Activated B cell treated with CpG ODN at 0.5 μM for 24 hours (primary cell): ENCODE measurements at regions of chr4 and their contacts with region 1.

Region 1: DNA sequence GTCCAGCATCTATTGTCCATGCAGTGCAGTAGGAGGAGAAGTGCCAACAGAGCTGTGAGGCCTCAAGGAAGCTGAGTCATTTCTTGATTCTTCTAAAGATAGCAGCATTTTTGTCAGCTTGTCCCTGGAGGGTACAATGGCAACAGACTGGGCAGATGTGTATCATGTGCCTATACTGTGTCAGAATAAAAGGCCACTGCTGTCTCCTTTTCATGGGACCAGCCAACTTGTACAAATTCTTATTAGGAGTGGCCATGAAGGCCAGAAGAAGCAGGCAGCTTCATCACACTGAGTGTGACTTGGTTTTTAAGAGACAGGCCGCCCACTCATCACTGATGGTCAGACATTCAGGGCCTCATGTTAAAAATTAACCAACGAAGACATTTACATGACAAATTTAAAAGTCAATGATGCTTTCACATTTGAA is 185.0 kb upstream of the FAM241A start:
- DNase-seq: no peak
- ATAC-seq: peak; percentile 84
- H3K4me3 Mint-ChIP-seq: no peak overlapping the region
- H3K27ac Mint-ChIP-seq: peak overlapping the region; percentile 1
- H3K4me1 Mint-ChIP-seq: peaks cover 9% of the 10 kb centered on the region
- H3K27me3 Mint-ChIP-seq: no peaks in the 10 kb centered on the region
- CTCF ChIP-seq: no peak

Region 2: DNA sequence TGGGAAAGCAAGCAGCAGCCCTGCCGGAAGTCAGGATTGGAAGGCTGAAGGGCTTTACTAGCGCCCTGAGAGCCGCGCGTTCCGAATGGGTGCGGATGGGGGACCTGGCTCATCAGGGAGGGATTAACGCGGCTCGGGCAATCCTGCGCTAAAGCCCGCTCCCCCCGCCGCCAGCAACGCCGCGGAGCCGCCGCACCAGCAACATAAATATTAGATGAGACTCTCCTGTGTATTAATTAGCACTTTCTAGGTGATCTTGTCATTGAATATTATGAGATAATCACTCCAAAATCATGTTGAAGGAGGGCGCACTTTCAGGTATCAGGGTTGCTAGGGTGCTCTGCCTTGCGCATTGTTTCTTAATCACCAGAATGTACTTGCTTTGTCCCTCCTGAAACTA is 172.2 kb before region 1 on chr4:
- CTCF ChIA-PET with region 1: no interaction called
- POLR2A ChIA-PET with region 1: no interaction called
- intact Hi-C with region 1: no loop called
- DNase-seq: no peak
- ATAC-seq: no peak
- H3K4me3 Mint-ChIP-seq: no peak overlapping the region
- H3K27ac Mint-ChIP-seq: no peak overlapping the region
- H3K4me1 Mint-ChIP-seq: no peaks in the 10 kb centered on the region
- H3K27me3 Mint-ChIP-seq: peaks cover 11% of the 10 kb centered on the region
- CTCF ChIP-seq: no peak

Region 3: DNA sequence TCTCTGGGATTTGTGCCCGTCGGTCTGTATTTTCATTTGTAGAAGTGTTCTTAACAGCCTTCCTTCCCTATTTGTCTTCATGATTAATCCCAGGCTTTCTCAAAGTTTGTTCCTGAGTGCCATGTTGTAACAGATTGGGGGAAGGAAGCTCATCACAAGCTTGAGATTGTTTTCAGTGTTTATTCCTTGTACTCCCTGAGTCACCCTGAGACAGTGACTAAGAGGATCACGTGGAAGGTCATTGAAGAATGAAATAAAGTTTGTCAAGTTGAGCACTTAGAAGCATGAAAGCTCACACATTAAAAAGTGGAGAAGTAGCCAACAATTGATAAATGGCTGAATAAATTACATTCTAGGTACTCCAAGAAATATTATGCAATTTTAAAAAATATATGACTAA is 31.5 kb after region 1 on chr4:
- CTCF ChIA-PET with region 1: no interaction called
- POLR2A ChIA-PET with region 1: interaction called, 4 read pairs
- intact Hi-C with region 1: loop called (anchors 1 kb)
- DNase-seq: no peak
- ATAC-seq: no peak
- H3K4me3 Mint-ChIP-seq: no peak overlapping the region
- H3K27ac Mint-ChIP-seq: peak overlapping the region; percentile 51
- H3K4me1 Mint-ChIP-seq: peaks cover 11% of the 10 kb centered on the region
- H3K27me3 Mint-ChIP-seq: peaks cover 7% of the 10 kb centered on the region
- CTCF ChIP-seq: no peak